ENCODE measurements at regions of chr15 and their contacts with region 1.

Region 1: GRCh38 chr15:81274931-81275707 is 48.8 kb downstream of the STARD5 start:
- DNase-seq: peak; percentile 72 to 78
- ATAC-seq: peak; percentile 88

Region 2: GRCh38 chr15:81091889-81092558 is 183.1 kb before region 1 on chr15:
- intact Hi-C with region 1: no loop called
- DNase-seq: no peak
- ATAC-seq: no peak

Region 3: DNA sequence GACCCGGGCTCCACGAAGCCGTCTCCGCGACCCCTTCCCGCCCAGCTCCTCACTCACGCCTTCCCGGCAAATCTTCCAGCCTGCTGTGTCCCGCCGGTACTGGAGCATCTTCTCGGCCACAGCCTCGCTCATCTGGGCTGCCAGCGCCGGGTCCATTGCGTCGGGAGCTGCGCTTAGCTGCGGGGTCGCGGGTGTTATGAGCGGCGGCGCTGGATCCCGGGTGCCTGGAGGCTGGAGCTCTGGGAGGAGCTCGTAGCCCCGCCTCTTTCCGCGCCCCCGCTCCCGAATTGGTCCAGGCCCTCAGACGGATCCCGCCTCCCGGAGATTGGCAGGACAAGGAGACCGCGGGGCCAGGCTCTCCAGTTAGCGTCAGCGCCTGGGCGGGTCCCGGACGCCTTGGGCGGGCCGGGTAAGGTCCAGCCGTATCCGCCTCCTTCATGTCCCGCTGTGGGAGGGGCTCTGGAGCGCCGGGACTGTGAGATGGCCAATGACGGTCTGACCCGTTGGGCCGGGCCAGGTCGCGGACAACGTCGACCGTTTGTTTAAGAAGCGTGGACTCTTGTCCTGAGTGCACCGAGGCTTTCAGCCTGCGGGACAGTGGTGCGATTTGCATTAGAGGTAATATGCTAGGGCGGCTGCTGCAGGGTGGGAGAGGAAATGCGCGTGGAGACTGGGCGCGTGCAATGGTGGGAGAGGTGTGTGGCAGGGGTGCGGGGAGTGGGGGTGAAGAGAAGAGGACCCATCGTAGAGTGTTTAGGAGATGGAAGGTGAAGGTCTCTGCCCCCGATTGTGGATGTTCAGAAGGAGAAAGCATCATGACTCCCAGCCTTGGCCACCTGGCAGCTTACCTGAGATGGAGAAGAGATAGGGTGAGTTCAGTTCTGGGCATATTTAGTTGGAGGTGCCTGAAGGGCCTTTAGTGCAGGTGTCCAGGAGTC is 49.1 kb after region 1 on chr15 and contains the start of gene STARD5:
- intact Hi-C with region 1: loop called in 1 of 2 experiments (anchors 10 kb)
- DNase-seq: peak; percentile 99 to 100
- ATAC-seq: peak; percentile 93
- total RNA-seq, gene STARD5: 32.7 to 36.4 TPM

Region 4: DNA sequence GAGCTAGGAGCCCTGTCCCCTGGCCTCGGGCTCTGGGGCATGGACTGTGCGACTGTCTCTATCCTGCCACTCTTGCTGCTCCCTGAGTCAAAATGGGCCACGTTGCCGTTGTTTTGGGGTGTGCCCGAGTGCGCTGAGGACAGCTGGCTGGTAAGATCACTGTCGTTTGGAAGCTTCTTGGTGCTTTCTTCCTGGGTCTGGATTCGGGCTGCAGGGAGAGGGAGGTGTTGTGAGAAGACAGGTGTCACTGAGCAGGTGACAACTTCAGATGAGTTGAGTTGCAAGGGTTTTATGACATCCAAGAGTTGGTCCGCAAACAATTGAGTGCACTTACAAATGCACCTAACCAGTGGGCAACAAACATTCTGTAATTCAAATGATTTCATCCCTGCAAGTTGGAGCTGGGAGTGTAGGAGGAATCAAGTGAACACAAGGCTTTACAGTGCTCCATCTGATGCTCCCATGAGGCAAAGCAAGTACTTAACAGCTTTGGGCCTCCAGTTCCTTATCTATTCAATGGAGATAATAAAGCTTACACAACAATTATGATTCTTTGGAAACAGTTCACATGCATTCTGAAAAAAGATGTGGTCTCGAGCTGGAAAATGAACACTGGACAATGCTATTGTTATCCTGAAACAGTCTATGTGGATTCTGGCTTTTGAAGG is 59.8 kb after region 1 on chr15:
- intact Hi-C with region 1: loop called in 1 of 2 experiments (anchors 5 kb)
- DNase-seq: no peak
- ATAC-seq: peak; percentile 65

Measured in left colon (tissue), 2 donors.